ENCODE measurements at regions of chr12 and their contacts with region 1.

Region 1: GRCh38 chr12:109804820-109805761 is 28.1 kb downstream of the TRPV4 start:
- DNase-seq: peak; percentile 53 to 82 (median 61)
- H3K4me3 ChIP-seq: no peak overlapping the region
- H3K4me3 Mint-ChIP-seq: no peak overlapping the region
- H3K27ac ChIP-seq: no peak overlapping the region
- H3K27ac Mint-ChIP-seq: peak overlapping the region in 1 of 8 donors; percentile 73
- H3K4me1 ChIP-seq: no peaks in the 10 kb centered on the region
- H3K4me1 Mint-ChIP-seq: peaks cover 0 to 3% (median 2%) of the 10 kb centered on the region in 3 donors
- H3K27me3 ChIP-seq: no peaks in the 10 kb centered on the region
- H3K27me3 Mint-ChIP-seq: no peaks in the 10 kb centered on the region

Region 2: DNA sequence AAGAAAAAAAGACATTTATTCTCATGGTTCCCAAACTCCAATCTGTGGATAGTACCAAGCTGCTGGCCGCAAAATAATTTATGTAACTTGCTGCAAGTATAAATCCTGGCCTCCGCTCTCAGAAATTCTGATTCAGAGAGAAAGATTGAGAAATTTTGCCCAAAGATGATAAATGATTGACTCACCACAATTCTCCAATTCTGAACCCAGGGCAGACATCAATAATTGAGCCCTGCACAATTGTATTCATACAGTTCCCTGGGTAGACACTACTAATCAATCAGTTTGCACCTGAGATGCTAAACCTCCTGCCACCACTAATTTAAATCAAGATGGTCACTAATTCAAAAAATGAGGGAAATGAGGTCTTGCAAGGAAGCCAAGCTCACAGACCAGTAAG is 10.1 kb before region 1 on chr12:
- CTCF ChIA-PET with region 1: interaction called, 12 read pairs
- POLR2A ChIA-PET with region 1: no interaction called
- DNase-seq: no peak
- H3K4me3 ChIP-seq: no peak overlapping the region
- H3K4me3 Mint-ChIP-seq: no peak overlapping the region
- H3K27ac ChIP-seq: no peak overlapping the region
- H3K27ac Mint-ChIP-seq: peak overlapping the region in 1 of 8 donors; percentile 58
- H3K4me1 ChIP-seq: no peaks in the 10 kb centered on the region
- H3K4me1 Mint-ChIP-seq: no peaks in the 10 kb centered on the region
- H3K27me3 ChIP-seq: no peaks in the 10 kb centered on the region
- H3K27me3 Mint-ChIP-seq: peaks cover 13 to 33% of the 10 kb centered on the region in 2 donors

Region 3: DNA sequence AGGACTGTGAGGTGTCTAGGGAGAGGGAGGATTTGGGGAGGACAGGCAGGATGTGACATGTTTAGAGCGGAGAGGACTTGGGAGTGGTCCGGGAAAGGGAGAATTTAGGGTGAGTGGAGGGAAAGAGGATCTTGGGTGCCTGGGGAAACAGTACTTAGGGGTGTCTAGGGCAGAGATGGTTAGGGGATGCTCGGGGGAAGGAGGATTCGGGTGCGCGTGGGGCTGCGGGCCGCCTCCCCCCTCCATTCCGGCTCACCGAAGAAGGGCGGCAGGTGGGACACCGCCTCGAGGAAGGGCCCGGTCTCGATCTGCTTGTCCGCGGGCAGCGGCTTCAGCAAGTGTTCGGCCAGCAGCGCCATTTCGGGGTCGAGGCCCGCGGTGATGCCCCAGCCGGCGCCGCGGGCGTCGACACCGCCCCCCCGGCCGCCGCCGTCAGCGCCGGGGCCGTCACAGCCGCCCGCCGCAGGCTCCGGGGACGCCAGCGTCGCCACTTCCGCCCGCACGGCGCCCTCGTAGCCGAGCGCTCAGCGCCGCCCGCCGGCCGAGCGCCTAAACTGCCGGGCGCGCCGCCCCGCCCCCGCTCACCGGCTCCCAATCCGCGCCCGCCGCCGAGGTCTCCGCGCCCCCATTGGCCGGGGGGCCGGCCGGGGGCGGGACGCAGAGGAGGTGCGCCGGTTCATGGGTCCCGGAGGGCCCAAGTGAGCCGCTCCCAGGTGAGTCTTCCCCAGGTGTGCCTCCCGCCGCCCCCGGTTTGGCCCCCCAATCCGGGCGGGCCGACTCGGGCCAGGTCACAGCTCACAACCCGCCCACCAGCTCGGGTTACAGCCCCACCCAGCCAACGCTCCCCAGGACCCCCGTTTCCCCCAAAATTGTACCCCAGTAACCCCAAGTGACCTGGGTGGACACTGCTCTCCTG is 75.2 kb after region 1 on chr12 and contains the start of gene GLTP:
- CTCF ChIA-PET with region 1: interaction called, 11 read pairs
- POLR2A ChIA-PET with region 1: no interaction called
- DNase-seq: peak; percentile 86 to 94 (median 91)
- H3K4me3 ChIP-seq: peak within 1 kb of the TSS; percentile 98
- H3K4me3 Mint-ChIP-seq: peak within 1 kb of the TSS; percentile 93 to 98 (median 96)
- H3K27ac ChIP-seq: peak within 1 kb of the TSS; percentile 85
- H3K27ac Mint-ChIP-seq: peak within 1 kb of the TSS; percentile 53 to 100 (median 98)
- H3K4me1 ChIP-seq: peaks cover 30% of the 10 kb centered on the region
- H3K4me1 Mint-ChIP-seq: peaks cover 43 to 54% (median 54%) of the 10 kb centered on the region in 3 donors
- H3K27me3 ChIP-seq: no peaks in the 10 kb centered on the region
- H3K27me3 Mint-ChIP-seq: peaks cover 0 to 2% of the 10 kb centered on the region in 2 donors
- total RNA-seq, gene GLTP: 39.3 to 42.7 TPM